Breast epithelium (tissue), 4 donors: ENCODE measurements at regions of chr11 and their contacts with region 1.

Region 1: DNA sequence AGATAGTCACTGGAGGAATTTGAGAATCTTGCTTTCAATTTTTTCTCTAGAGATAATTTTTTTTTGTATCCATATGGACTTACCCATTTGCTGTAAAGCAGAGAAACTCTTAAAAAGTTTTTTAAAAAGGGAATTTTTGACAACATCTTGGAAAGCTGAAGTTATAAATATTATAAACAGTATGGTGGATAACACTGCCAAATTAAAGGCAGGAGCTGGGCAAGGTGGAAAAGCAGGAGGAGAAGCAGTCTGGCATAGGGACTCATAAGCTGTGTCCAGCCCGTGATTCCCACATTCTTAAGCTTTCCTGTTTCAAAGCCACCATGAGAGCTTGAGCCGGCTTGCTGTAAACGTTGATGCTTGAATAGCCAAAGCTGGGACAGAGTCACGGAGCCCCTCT is 149.5 kb downstream of the NAV2 start:
- DNase-seq: no peak
- H3K4me3 ChIP-seq: no peak overlapping the region
- H3K27ac ChIP-seq: no peak overlapping the region
- H3K4me1 ChIP-seq: peaks cover 0 to 4% of the 10 kb centered on the region in 2 donors
- H3K27me3 ChIP-seq: no peaks in the 10 kb centered on the region
- CTCF ChIP-seq: no peak
- POLR2A ChIP-seq: no peak

Region 2: GRCh38 chr11:19849107-19849789 is 12.8 kb before region 1 on chr11:
- intact Hi-C with region 1: loop called (anchors 1 kb)
- DNase-seq: no peak
- H3K4me3 ChIP-seq: no peak overlapping the region
- H3K27ac ChIP-seq: peak overlapping the region in 1 of 2 donors; percentile 5
- H3K4me1 ChIP-seq: no peaks in the 10 kb centered on the region
- H3K27me3 ChIP-seq: no peaks in the 10 kb centered on the region
- CTCF ChIP-seq: no peak
- POLR2A ChIP-seq: no peak